Activated naive CD4-positive, alpha-beta T cell treated with anti-CD3 and anti-CD28 coated beads for 36 hours (primary cell): ENCODE measurements at regions of chr18 and their contacts with region 1.

Region 1: GRCh38 chr18:49561289-49562193 is at the start of gene LIPG:
- DNase-seq: peak; percentile 76
- H3K4me3 Mint-ChIP-seq: peak within 1 kb of the TSS; percentile 66
- H3K27ac Mint-ChIP-seq: no peak within 1 kb of the TSS
- H3K4me1 Mint-ChIP-seq: peaks cover 31% of the 10 kb centered on the region
- H3K27me3 Mint-ChIP-seq: peaks cover 65% of the 10 kb centered on the region
- total RNA-seq, gene LIPG: 0.22 to 0.45 TPM

Region 2: GRCh38 chr18:49447810-49448745 is 113.5 kb before region 1 on chr18:
- CTCF ChIA-PET with region 1: no interaction called
- intact Hi-C with region 1: no loop called
- DNase-seq: peak; percentile 53
- H3K4me3 Mint-ChIP-seq: no peak overlapping the region
- H3K27ac Mint-ChIP-seq: no peak overlapping the region
- H3K4me1 Mint-ChIP-seq: peaks cover 6% of the 10 kb centered on the region
- H3K27me3 Mint-ChIP-seq: no peaks in the 10 kb centered on the region

Region 3: GRCh38 chr18:49486953-49487710 is 74.4 kb before region 1 on chr18 and contains the start of gene C18orf32:
- CTCF ChIA-PET with region 1: no interaction called
- intact Hi-C with region 1: loop called (anchors 2 kb)
- DNase-seq: peak; percentile 94
- H3K4me3 Mint-ChIP-seq: peak within 1 kb of the TSS; percentile 94
- H3K27ac Mint-ChIP-seq: peak within 1 kb of the TSS; percentile 94
- H3K4me1 Mint-ChIP-seq: peaks cover 63% of the 10 kb centered on the region
- H3K27me3 Mint-ChIP-seq: no peaks in the 10 kb centered on the region
- total RNA-seq, gene C18orf32: 24.1 to 26.6 TPM

Region 4: DNA sequence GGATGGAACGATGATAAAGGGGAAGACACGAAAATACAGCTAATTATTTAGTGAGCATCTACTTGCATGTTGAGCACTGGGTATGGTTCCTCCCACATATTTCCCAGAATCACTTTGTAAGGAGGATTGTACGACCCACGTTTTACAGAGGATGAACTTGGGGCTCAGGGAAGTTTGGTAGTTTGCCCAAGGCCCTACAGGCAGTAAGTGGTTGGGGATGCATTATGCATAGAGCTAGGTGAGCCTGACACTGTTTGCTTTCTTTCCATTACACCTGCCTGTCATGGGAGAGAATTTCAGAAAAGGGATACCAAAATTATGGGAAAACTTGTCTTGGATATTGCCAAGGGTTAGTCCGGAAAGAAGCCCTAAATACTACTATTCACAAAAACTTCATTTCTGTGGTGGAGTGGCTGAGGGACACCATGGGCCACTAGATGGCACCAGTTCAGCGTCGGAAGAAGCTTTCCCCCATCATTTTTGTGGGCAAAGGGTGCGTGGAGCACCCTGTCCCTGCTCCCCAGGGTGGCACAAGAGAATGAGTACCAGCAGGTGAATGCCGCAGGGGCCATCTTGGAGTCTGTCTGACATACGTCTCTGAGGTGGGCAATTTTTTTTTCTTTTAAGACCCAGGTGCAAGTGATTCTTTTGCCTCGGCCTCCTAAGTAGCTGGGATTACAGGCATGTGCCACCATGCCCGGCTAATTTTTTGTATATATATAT is 51.0 kb before region 1 on chr18:
- CTCF ChIA-PET with region 1: interaction called, 3 read pairs
- intact Hi-C with region 1: loop called (anchors 5 kb)
- DNase-seq: peak; percentile 60
- H3K4me3 Mint-ChIP-seq: no peak overlapping the region
- H3K27ac Mint-ChIP-seq: no peak overlapping the region
- H3K4me1 Mint-ChIP-seq: no peaks in the 10 kb centered on the region
- H3K27me3 Mint-ChIP-seq: peaks cover 12% of the 10 kb centered on the region

Region 5: GRCh38 chr18:49728542-49728941 is 167.0 kb after region 1 on chr18:
- CTCF ChIA-PET with region 1: interaction called, 3 read pairs
- intact Hi-C with region 1: loop called (anchors 5 kb)
- DNase-seq: peak; percentile 69
- H3K4me3 Mint-ChIP-seq: no peak overlapping the region
- H3K27ac Mint-ChIP-seq: no peak overlapping the region
- H3K4me1 Mint-ChIP-seq: peaks cover 4% of the 10 kb centered on the region
- H3K27me3 Mint-ChIP-seq: no peaks in the 10 kb centered on the region

Region 6: GRCh38 chr18:49784427-49785185 is 223.1 kb after region 1 on chr18:
- CTCF ChIA-PET with region 1: no interaction called
- intact Hi-C with region 1: loop called (anchors 10 kb)
- DNase-seq: no peak
- H3K4me3 Mint-ChIP-seq: no peak overlapping the region
- H3K27ac Mint-ChIP-seq: no peak overlapping the region
- H3K4me1 Mint-ChIP-seq: peaks cover 35% of the 10 kb centered on the region
- H3K27me3 Mint-ChIP-seq: no peaks in the 10 kb centered on the region

Region 7: DNA sequence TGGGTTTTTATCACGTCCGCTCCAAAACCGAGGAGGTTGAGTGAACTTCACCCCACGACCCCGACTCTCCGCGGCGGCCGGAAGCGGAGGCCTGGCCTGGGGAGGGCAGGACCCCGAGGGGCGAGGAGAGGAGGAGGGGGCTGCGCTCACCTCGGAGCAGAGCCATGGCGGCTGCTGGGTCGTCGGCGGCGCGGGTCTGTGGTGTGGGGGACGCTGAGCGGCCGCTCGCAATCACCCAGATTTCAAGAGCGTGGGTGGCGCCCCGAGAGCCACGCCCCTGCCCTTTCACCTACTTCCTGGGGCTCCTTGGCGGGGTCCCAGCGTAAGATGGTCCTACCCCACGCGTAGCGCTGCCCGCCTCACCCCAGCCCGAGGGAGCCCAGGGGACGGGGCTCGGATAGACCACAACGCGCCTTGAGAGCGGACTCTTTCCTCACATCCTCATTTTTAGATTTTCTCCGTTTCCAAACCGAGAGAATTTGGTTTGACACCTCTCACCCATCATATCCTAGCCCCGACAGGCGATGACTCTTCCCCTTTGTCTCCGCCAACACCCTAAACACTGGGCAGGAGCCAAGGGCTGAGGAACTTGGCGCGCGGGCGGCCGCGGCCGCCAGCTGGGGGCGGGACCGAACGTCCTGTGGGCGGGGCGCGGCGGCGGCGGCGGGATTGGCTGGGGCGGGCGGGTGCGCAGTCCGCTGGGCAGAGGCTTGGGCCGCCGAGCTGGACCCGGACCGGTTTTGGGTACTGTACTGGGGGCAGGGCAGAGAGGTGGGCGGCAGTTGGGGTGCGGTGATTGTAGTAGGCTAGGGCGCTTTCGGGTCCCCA is 252.0 kb after region 1 on chr18 and contains the start of gene ACAA2:
- CTCF ChIA-PET with region 1: no interaction called
- intact Hi-C with region 1: loop called (anchors 1 kb)
- DNase-seq: peak; percentile 80
- H3K4me3 Mint-ChIP-seq: peak within 1 kb of the TSS; percentile 90
- H3K27ac Mint-ChIP-seq: peak within 1 kb of the TSS; percentile 96
- H3K4me1 Mint-ChIP-seq: peaks cover 36% of the 10 kb centered on the region
- H3K27me3 Mint-ChIP-seq: no peaks in the 10 kb centered on the region
- total RNA-seq, gene ACAA2: 67.9 to 69.8 TPM

Region 8: DNA sequence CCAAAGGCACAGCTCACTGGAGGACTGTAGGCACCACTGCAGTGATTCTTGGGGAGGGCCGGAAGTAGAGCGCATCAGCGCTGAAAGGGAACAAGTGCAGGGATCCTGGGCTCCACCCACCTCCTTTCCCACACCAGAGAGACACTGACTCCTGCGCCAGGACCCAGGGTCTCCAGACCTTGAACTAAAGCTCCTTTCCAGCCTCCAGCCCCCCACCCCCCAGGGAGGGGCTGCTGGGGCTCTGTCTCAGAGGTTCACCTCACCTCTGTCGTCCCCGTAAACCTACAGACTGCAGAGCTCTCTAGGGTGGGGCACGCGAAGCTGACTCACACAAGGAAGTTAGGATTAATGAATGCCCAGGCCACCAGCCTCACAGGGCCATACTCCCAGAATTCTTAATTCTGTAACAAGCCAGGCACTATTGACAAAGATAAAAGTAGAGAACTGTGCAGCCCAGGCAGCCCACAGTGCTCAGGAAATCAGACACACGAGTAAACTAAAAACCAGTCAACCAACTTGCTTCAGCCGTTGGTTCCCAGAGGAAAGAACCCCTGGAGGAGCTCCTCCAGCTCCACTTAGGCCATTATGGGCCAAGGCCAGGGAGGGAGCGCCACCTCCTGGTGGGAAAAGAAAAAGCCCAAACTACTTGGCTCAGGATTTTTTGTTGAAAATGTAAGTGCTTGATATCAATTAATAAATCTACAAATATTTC is 296.9 kb after region 1 on chr18:
- CTCF ChIA-PET with region 1: interaction called, 24 read pairs
- intact Hi-C with region 1: loop called (anchors 1 kb)
- DNase-seq: peak; percentile 73
- H3K4me3 Mint-ChIP-seq: no peak overlapping the region
- H3K27ac Mint-ChIP-seq: no peak overlapping the region
- H3K4me1 Mint-ChIP-seq: no peaks in the 10 kb centered on the region
- H3K27me3 Mint-ChIP-seq: no peaks in the 10 kb centered on the region